ENCODE measurements at regions of chr4 and their contacts with region 1.

Region 1: DNA sequence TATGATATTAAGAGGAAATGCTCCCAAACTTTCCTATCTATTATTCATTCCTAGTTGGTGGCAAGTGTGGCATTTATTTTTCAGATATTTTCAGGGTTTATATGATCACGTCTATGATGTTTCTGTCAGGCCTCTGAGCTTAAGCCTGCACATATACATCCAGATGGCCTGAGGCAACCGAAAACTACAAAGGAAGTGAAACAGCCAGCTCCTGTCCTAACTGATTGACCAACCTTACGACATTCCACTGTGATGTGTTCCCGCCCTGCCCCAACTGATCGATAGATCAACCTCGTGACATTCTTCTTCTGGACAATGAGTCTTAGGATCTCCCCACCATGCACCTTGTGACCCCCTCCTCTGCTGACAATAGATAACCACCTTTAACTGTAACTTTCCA is 67.6 kb upstream of the CTSO start:
- DNase-seq: no peak
- ATAC-seq: no peak
- H3K4me3 ChIP-seq: no peak overlapping the region
- H3K27ac ChIP-seq: no peak overlapping the region
- H3K4me1 ChIP-seq: no peaks in the 10 kb centered on the region
- H3K27me3 ChIP-seq: no peaks in the 10 kb centered on the region; a peak in 2 of 4 replicates
- CTCF ChIP-seq: no peak
- EP300 ChIP-seq: no peak
- POLR2A ChIP-seq: no peak
- RAD21 ChIP-seq: no peak

Region 2: GRCh38 chr4:155122382-155122781 is 898.9 kb before region 1 on chr4:
- CTCF ChIA-PET with region 1: no interaction called
- POLR2A ChIA-PET with region 1: no interaction called
- RAD21 ChIA-PET with region 1: no interaction called
- SMC1A ChIA-PET with region 1: no interaction called
- in situ Hi-C with region 1: no loop called
- intact Hi-C with region 1: no loop called
- DNase-seq: no peak
- ATAC-seq: no peak
- H3K4me3 ChIP-seq: no peak overlapping the region
- H3K27ac ChIP-seq: no peak overlapping the region
- H3K4me1 ChIP-seq: no peaks in the 10 kb centered on the region
- H3K27me3 ChIP-seq: no peaks in the 10 kb centered on the region
- CTCF ChIP-seq: no peak
- EP300 ChIP-seq: no peak
- POLR2A ChIP-seq: no peak
- RAD21 ChIP-seq: no peak

Region 3: GRCh38 chr4:156006192-156006591 is 15.1 kb before region 1 on chr4:
- CTCF ChIA-PET with region 1: no interaction called
- POLR2A ChIA-PET with region 1: no interaction called
- RAD21 ChIA-PET with region 1: interaction called, 3 read pairs
- SMC1A ChIA-PET with region 1: interaction called, 10 read pairs
- in situ Hi-C with region 1: no loop called
- intact Hi-C with region 1: no loop called
- DNase-seq: no peak
- ATAC-seq: no peak
- H3K4me3 ChIP-seq: no peak overlapping the region
- H3K27ac ChIP-seq: no peak overlapping the region
- H3K4me1 ChIP-seq: no peaks in the 10 kb centered on the region
- H3K27me3 ChIP-seq: no peaks in the 10 kb centered on the region
- CTCF ChIP-seq: no peak
- EP300 ChIP-seq: no peak
- POLR2A ChIP-seq: no peak
- RAD21 ChIP-seq: no peak

Measured in GM12878 (cell line).